BJ (cell line): ENCODE measurements at regions of chr1 and their contacts with region 1.

Region 1: GRCh38 chr1:152533327-152533938 is 19.2 kb downstream of the CRCT1 start:
- DNase-seq: no peak
- H3K4me3 ChIP-seq: no peak overlapping the region
- H3K27me3 ChIP-seq: peaks cover 1% of the 10 kb centered on the region; the same call in 1 of the 2 replicates
- CTCF ChIP-seq: peak; percentile 77

Region 2: GRCh38 chr1:152347116-152347728 is 186.2 kb before region 1 on chr1:
- CTCF ChIA-PET with region 1: no interaction called
- POLR2A ChIA-PET with region 1: no interaction called
- DNase-seq: peak; percentile 17
- H3K4me3 ChIP-seq: no peak overlapping the region
- H3K27me3 ChIP-seq: no peaks in the 10 kb centered on the region
- CTCF ChIP-seq: peak; percentile 86

Region 3: DNA sequence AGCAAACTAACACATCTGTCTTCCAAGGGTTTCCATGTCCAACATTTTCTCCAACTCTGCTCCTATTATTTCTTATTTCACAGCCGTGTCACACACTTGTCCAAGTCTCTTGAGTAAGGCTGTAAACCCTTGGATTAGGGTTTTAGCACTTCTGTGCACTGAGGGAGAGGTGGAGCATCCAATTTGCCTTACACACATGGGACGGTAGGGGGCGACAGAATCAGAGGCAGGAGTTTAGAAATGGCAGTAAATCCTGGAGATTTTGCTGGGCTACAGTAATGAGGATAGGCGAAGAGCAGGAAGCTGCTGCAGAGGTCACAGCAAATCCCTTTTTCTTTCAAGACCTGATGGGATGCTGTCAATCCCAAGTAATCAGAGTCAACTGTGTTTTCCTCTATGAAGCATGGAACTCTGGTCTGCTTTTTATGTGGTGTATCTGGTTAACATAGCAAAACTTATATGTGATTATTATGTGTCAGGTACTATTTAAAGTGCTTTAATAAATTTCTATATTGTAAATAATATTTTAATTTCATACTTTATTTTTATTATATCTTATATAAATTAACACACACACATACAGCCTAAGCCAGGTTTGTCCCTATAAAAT is 38.3 kb before region 1 on chr1:
- CTCF ChIA-PET with region 1: interaction called, 59 read pairs
- POLR2A ChIA-PET with region 1: no interaction called
- DNase-seq: no peak
- H3K4me3 ChIP-seq: no peak overlapping the region
- H3K27me3 ChIP-seq: no peaks in the 10 kb centered on the region; the same call in 1 of the 2 replicates
- CTCF ChIP-seq: peak; percentile 72

Region 4: GRCh38 chr1:152654110-152654509 is 120.7 kb after region 1 on chr1:
- CTCF ChIA-PET with region 1: no interaction called
- POLR2A ChIA-PET with region 1: no interaction called
- DNase-seq: no peak
- H3K4me3 ChIP-seq: no peak overlapping the region
- H3K27me3 ChIP-seq: no peaks in the 10 kb centered on the region
- CTCF ChIP-seq: peak; percentile 77